ENCODE measurements at regions of chr14 and their contacts with region 1.

Region 1: DNA sequence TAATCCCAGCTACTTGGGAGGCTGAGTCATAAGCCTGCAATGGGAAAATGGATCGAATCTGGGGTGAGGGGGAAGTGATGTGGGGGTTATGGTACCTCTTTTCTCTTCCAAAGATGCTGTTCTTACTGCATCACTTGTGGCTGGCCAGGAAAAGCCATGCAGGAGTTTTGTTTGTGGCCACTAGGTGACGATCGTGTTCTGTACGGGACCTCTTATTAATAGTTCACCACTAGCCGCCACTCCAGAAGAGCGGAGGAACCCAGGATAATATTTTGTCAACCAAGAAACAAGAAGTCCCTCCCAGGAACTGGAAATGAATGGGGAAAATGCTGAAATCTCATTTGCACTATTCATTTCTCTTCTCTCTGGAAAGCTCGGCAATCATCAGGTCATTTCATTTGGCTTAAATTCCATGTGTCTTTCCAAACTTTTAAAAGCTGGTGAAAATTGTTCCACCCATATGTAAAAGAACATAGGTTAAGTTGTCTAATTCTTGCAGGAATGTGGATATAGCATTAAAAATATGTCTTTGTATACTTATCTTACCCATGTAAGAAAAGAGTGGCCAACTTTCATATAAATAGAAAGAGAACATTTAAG is 8.9 kb downstream of the GPR65 start:
- DNase-seq: peak; percentile 63 to 84
- ATAC-seq: peak; percentile 99 to 100
- H3K4me3 ChIP-seq: no peak overlapping the region
- H3K27ac ChIP-seq: peak overlapping the region in 1 of 2 experiments; percentile 29; a peak in 1 of 6 replicates
- H3K4me1 ChIP-seq: no peaks in the 10 kb centered on the region
- CTCF ChIP-seq: peak; percentile 95
- EP300 ChIP-seq: no peak
- POLR2A ChIP-seq: no peak
- RAD21 ChIP-seq: peak; percentile 94 to 96

Region 2: GRCh38 chr14:87994974-87995373 is 18.9 kb before region 1 on chr14:
- CTCF ChIA-PET with region 1: interaction called, 14 read pairs
- POLR2A ChIA-PET with region 1: no interaction called
- DNase-seq: no peak
- ATAC-seq: no peak
- H3K4me3 ChIP-seq: no peak overlapping the region
- H3K27ac ChIP-seq: no peak overlapping the region
- H3K4me1 ChIP-seq: 0 out of 3 replicates have a peak, but pooled peaks cover 6% of the 10 kb centered on the region
- CTCF ChIP-seq: no peak
- EP300 ChIP-seq: no peak
- POLR2A ChIP-seq: no peak
- RAD21 ChIP-seq: no peak

Region 3: DNA sequence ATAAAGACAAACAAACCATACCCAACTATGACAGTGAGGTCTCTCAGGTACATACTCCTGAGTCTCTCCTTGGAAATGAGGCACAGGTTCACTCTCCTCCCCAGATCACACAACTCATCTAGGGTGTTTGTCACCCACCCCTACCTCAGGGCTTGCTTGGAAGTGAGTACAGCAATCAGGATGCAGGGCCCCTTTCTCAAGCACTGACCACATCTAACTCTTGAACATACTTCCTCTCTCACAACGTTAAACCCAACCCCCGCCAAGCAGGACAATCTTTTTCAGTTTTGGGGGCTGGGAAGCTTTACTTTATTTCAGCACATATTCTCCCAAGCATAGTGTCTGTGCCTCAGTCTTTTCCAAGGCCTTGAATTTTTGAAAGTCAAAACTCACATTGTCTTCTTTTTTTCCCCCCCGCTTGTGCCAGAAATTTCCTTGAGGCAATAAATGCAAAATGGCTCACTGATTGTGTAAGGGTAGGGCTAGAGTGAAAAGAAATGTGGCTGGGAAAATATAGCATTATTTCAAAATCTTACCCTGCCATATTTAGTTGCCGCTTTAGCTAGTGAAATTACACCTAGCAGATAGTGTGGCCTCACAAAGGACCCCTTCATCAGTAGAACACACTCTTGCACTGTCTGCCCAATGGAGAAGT is 11.3 kb before region 1 on chr14:
- CTCF ChIA-PET with region 1: interaction called, 12 read pairs
- POLR2A ChIA-PET with region 1: no interaction called
- DNase-seq: no peak
- ATAC-seq: no peak
- H3K4me3 ChIP-seq: no peak overlapping the region
- H3K27ac ChIP-seq: no peak overlapping the region
- H3K4me1 ChIP-seq: no peaks in the 10 kb centered on the region
- CTCF ChIP-seq: no peak
- EP300 ChIP-seq: no peak
- POLR2A ChIP-seq: no peak
- RAD21 ChIP-seq: no peak

Region 4: GRCh38 chr14:88168498-88169165 is 154.8 kb after region 1 on chr14:
- CTCF ChIA-PET with region 1: interaction called, 11 read pairs
- POLR2A ChIA-PET with region 1: no interaction called
- DNase-seq: peak; percentile 18 to 55
- ATAC-seq: peak; percentile 87 to 93
- H3K4me3 ChIP-seq: no peak overlapping the region
- H3K27ac ChIP-seq: no peak overlapping the region
- H3K4me1 ChIP-seq: peaks cover 7% of the 10 kb centered on the region; the same call in 2 of the 3 replicates
- CTCF ChIP-seq: peak; percentile 54
- EP300 ChIP-seq: no peak
- POLR2A ChIP-seq: no peak
- RAD21 ChIP-seq: peak; percentile 52 to 64

Measured in A549 (cell line).